Sigmoid colon (tissue), 7 donors: ENCODE measurements at regions of chr15 and their contacts with region 1.

Region 1: DNA sequence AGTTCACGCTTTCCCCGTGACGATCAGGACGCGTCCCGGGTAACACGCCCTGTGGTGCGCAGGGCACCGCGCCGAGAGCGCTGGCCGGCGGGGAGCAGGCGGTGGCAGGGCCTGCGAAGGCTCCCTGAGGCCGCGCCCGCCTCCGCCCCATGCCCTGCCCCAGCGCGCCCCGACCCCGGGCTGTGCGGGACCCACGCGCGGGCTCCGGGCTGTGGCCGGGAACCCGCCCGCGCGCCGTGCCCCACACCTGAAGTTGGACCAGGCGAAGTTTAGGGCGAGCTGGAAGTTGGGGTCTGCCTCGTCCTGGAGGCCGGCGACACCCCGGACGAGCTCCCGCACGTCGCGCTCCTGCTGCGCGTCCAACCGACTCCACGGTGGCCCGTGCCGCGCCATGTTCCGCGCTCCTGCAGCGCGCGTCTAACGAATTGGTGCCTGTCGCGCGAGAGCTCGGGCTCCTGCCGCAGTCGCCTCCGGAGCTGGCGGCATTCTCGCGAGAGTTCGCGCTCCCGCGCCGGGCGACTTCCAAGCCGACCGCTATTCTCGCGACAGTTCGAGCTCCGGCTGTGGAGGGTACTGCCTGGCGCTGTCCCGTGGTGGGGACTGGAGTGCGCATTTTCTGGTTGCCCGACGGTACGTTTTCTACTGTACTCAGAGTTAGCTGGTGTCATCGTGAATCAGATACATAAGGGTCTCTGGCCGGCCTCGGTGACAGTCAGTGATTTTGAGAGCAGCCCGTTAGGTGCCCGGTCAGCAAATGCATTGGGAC is at the start of gene TUBGCP5:
- DNase-seq: peak; percentile 99
- H3K4me3 ChIP-seq: peak within 1 kb of the TSS; percentile 47 to 96 (median 89)
- H3K27ac ChIP-seq: peak within 1 kb of the TSS; percentile 76 to 88 (median 86)
- H3K4me1 ChIP-seq: peaks cover 0 to 22% (median 14%) of the 10 kb centered on the region in 4 donors
- H3K27me3 ChIP-seq: no peaks in the 10 kb centered on the region
- CTCF ChIP-seq: peak; percentile 29 to 62 (median 54)
- EP300 ChIP-seq: no peak
- POLR2A ChIP-seq: peak; percentile 66 to 72
- total RNA-seq, gene TUBGCP5: 18.1 to 32.3 (median 24.4) TPM

Region 2: GRCh38 chr15:22838292-22839042 is 200.9 kb before region 1 on chr15 and contains the start of gene NIPA2:
- intact Hi-C with region 1: loop called (anchors 2 kb)
- DNase-seq: peak; percentile 99
- H3K4me3 ChIP-seq: peak within 1 kb of the TSS; percentile 59 to 86 (median 70)
- H3K27ac ChIP-seq: peak within 1 kb of the TSS; percentile 86 to 97 (median 94)
- H3K4me1 ChIP-seq: peaks cover 0 to 27% (median 20%) of the 10 kb centered on the region in 4 donors
- H3K27me3 ChIP-seq: no peaks in the 10 kb centered on the region
- CTCF ChIP-seq: peak in 1 of 4 experiments; percentile 25
- EP300 ChIP-seq: peak in 2 of 4 donors; percentile 32 to 83
- POLR2A ChIP-seq: peak; percentile 82 to 83
- total RNA-seq, gene NIPA2: 21.6 to 40.3 (median 29.9) TPM

Region 3: DNA sequence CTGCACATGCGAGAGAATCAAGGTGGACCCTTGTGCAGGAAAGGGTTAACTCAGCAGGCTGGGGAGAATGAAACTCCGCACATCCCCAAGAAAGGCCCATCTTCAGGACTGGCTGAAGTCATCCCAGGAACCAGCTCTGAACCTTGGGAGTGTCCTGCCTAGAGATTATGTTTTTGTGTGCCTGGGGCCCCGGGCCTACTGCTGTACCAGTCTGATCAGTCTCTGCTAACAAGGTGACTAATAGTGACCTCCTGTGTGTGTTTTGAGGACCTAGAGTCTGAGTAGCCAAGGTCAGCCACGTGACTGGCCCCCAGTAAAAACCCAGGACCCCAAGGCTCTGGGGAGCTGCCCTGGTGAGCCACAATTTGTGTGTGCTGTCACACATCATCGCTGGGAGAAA is 117.3 kb before region 1 on chr15:
- intact Hi-C with region 1: loop called (anchors 10 kb)
- DNase-seq: no peak
- H3K4me3 ChIP-seq: no peak overlapping the region
- H3K27ac ChIP-seq: no peak overlapping the region
- H3K4me1 ChIP-seq: no peaks in the 10 kb centered on the region
- H3K27me3 ChIP-seq: no peaks in the 10 kb centered on the region
- CTCF ChIP-seq: no peak
- EP300 ChIP-seq: no peak
- POLR2A ChIP-seq: no peak

Region 4: GRCh38 chr15:22980189-22981050 is 58.9 kb before region 1 on chr15 and contains the start of gene CYFIP1:
- intact Hi-C with region 1: loop called (anchors 10 kb)
- DNase-seq: peak; percentile 93
- H3K4me3 ChIP-seq: peak within 1 kb of the TSS; percentile 82 to 95 (median 90)
- H3K27ac ChIP-seq: peak within 1 kb of the TSS; percentile 81 to 87 (median 82)
- H3K4me1 ChIP-seq: peaks cover 0 to 21% (median 12%) of the 10 kb centered on the region in 4 donors
- H3K27me3 ChIP-seq: no peaks in the 10 kb centered on the region
- CTCF ChIP-seq: no peak
- EP300 ChIP-seq: no peak
- POLR2A ChIP-seq: peak; percentile 10 to 20
- total RNA-seq, gene CYFIP1: 69.8 to 99.6 (median 77.2) TPM

Region 5: GRCh38 chr15:23467110-23467600 is 427.8 kb after region 1 on chr15:
- intact Hi-C with region 1: loop called (anchors 10 kb)
- DNase-seq: no peak
- H3K4me3 ChIP-seq: no peak overlapping the region
- H3K27ac ChIP-seq: no peak overlapping the region
- H3K4me1 ChIP-seq: no peaks in the 10 kb centered on the region
- H3K27me3 ChIP-seq: no peaks in the 10 kb centered on the region
- CTCF ChIP-seq: peak in 3 of 4 experiments; percentile 32 to 39 (median 34)
- EP300 ChIP-seq: no peak
- POLR2A ChIP-seq: no peak